ENCODE measurements at regions of chr12 and their contacts with region 1.

Region 1: DNA sequence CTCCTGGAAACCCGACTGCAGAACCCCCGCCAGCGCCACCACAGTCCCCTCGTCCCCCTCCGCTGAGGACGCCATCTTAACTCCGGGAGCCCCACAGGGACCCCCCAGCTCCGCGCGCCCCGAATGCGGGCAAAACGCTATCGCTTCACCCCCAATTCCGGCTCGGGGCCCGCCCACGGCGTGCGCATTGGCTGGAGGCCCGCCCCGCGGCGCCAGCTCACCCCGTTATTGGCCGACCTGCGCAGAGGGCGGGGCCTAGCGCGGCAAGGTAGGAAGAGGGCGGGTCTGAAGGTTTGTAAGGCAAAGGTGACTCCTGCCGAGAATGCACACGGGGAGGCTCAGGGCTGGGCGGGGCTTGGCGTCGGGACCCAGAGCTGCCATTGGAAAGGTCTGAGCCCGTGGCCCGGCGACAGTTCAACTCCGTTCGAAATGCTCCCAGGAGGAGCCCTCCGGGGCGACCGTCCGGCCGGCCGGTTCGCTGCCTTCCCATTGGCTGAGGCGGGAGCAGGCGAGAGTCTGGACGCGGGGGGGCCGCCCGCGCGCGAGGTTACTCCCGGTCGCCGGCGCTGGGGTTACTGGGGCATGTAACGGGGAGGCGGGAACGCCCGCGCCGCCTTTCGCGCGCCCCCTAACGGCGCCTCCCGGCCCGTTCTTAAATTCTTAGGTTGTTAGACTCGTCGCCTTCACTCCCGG is at the start of gene LPCAT3:
- DNase-seq: peak; percentile 86 to 98
- H3K4me3 ChIP-seq: peak within 1 kb of the TSS; percentile 74 to 91 (median 80)
- H3K27ac ChIP-seq: peak within 1 kb of the TSS; percentile 76; the same call in 1 of the 2 replicates
- H3K4me1 ChIP-seq: peaks cover 0 to 3% (median under 1%) of the 10 kb centered on the region in 4 experiments; a peak in 2 of 7 replicates
- H3K27me3 ChIP-seq: no peaks in the 10 kb centered on the region
- CTCF ChIP-seq: peak; percentile 73 to 84 (median 77)
- EP300 ChIP-seq: peak in 1 of 2 experiments; percentile 66; a peak in 1 of 3 replicates
- POLR2A ChIP-seq: peak; percentile 13 to 37; a peak in 2 of 3 replicates
- RAD21 ChIP-seq: peak; percentile 53 to 64
- total RNA-seq, gene LPCAT3: 55.2 and 55.8 TPM in 2 replicates

Region 2: GRCh38 chr12:6582196-6582595 is 436.3 kb before region 1 on chr12:
- CTCF ChIA-PET with region 1: no interaction called
- POLR2A ChIA-PET with region 1: no interaction called
- DNase-seq: no peak
- H3K4me3 ChIP-seq: no peak overlapping the region
- H3K27ac ChIP-seq: no peak overlapping the region; the same call in 1 of the 2 replicates
- H3K4me1 ChIP-seq: no peaks in the 10 kb centered on the region
- H3K27me3 ChIP-seq: no peaks in the 10 kb centered on the region
- CTCF ChIP-seq: peak in 2 of 3 experiments; percentile 37 to 55; a peak in 3 of 4 replicates
- EP300 ChIP-seq: no peak
- POLR2A ChIP-seq: no peak
- RAD21 ChIP-seq: peak in 1 of 2 experiments; percentile 13; a peak in 1 of 4 replicates

Region 3: GRCh38 chr12:7005311-7005710 is 13.2 kb before region 1 on chr12:
- CTCF ChIA-PET with region 1: interaction called, 13 read pairs
- POLR2A ChIA-PET with region 1: interaction called, 7 read pairs
- DNase-seq: no peak
- H3K4me3 ChIP-seq: no peak overlapping the region
- H3K27ac ChIP-seq: no peak overlapping the region
- H3K4me1 ChIP-seq: no peaks in the 10 kb centered on the region
- H3K27me3 ChIP-seq: no peaks in the 10 kb centered on the region
- CTCF ChIP-seq: no peak
- EP300 ChIP-seq: no peak
- POLR2A ChIP-seq: no peak
- RAD21 ChIP-seq: no peak

Measured in H1 (cell line).